GM18951 (cell line): ENCODE measurements at regions of chr1 and their contacts with region 1.

Region 1: GRCh38 chr1:209576798-209577197 is 6.7 kb upstream of the CAMK1G start:
- POLR2A ChIP-seq: no peak

Region 2: DNA sequence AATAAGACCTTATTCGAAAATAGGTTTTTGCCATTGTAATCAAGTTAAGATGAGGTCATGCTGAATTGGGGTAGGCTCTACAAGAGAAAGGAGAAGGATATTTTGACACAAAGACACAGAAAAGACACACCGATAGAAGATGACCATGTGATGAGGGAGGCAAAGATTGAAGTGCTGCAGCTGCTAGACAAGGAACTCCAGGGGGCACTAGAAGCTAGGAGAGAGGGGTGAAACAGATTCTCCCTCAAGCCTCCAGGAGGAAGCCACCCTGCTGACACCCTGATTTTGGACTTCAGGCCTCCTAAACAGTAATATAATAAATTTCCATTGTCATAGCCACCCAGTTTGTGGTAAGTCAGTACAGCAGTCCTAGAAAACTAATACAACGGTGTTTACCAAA is 500.1 kb before region 1 on chr1:
- in situ Hi-C with region 1: no loop called
- POLR2A ChIP-seq: no peak

Region 3: DNA sequence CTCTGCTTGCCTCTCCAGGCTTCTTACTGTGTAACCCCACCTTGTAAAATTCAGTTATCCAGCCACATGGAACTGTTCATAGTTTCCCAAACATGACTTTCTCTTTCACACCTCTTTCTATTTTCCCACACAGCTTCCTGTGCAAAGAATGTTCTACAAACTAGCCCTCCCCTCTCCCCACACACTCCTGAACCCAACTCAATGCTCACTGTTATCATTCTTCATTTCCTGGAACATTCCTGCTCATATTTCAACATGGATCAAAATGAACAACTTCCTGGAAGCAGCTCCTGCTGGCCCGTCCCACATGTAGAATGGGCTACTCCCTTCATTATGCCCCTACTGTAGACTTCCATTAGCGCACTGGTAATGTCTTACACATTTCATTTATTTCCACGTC is 120.3 kb after region 1 on chr1:
- in situ Hi-C with region 1: loop called (anchors 5 kb)
- POLR2A ChIP-seq: no peak